ENCODE measurements at regions of chr10 and their contacts with region 1.

Region 1: DNA sequence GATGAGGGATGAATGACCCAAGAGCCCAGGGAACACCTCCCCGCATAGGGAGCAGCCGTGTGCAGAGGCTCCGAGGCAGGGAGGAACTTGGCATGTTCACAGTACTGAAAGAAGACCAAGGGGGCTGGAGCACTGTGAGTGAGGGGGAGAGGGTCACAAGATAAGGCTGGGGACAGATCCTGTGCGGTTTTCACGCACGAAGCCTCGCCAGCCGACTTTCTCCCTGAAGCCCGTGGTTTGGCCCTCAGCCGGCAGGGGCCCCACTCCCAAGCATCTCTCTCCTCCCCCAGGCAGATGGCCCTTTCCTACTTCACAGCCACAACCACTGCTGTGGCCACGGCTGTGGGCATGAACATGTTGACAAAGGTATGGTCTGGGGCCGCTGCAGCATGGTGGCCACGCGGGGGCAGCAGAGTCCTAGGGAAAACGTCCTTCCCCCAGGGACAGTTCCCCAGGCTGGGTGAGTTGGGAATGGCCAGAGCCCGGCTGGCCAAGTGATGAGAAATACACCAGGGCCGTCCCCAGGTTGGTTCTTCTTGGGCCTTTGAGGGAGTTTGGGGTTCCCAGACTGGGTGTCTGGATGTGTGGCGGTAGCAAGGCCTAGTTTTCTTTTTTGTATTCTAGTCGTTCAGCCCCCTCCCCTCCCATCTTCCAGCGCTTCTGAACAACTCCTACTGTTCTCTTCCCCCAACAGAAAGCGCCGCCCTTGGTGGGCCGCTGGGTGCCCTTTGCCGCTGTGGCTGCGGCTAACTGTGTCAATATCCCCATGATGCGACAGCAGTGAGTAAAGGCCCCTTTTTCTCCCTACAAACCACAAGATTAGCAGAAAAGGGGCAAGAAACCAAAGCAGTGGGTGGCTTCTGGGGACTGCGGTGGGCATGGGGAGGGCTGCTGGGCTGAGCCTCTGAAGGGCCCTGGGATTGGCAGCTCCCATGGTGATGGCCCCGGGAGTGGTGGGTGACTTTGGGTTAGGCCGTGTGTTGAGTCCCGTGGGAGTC is 14.4 kb upstream of the WBP1L start:
- DNase-seq: peak; percentile 93 to 98
- ATAC-seq: peak; percentile 94
- H3K4me3 ChIP-seq: no peak overlapping the region
- H3K27ac ChIP-seq: no peak overlapping the region
- H3K4me1 ChIP-seq: no peaks in the 10 kb centered on the region
- H3K27me3 ChIP-seq: no peaks in the 10 kb centered on the region

Region 2: GRCh38 chr10:102904346-102904745 is 175.0 kb after region 1 on chr10:
- intact Hi-C with region 1: loop called (anchors 1 to 2 kb)
- DNase-seq: no peak
- ATAC-seq: no peak
- H3K4me3 ChIP-seq: no peak overlapping the region
- H3K27ac ChIP-seq: no peak overlapping the region
- H3K4me1 ChIP-seq: no peaks in the 10 kb centered on the region
- H3K27me3 ChIP-seq: no peaks in the 10 kb centered on the region

Region 3: GRCh38 chr10:103069453-103070331 is 340.4 kb after region 1 on chr10:
- intact Hi-C with region 1: loop called in 1 of 2 experiments (anchors 5 kb)
- DNase-seq: peak in 1 of 2 donors; percentile 69
- ATAC-seq: peak; percentile 51
- H3K4me3 ChIP-seq: no peak overlapping the region
- H3K27ac ChIP-seq: no peak overlapping the region
- H3K4me1 ChIP-seq: no peaks in the 10 kb centered on the region
- H3K27me3 ChIP-seq: no peaks in the 10 kb centered on the region

Region 4: DNA sequence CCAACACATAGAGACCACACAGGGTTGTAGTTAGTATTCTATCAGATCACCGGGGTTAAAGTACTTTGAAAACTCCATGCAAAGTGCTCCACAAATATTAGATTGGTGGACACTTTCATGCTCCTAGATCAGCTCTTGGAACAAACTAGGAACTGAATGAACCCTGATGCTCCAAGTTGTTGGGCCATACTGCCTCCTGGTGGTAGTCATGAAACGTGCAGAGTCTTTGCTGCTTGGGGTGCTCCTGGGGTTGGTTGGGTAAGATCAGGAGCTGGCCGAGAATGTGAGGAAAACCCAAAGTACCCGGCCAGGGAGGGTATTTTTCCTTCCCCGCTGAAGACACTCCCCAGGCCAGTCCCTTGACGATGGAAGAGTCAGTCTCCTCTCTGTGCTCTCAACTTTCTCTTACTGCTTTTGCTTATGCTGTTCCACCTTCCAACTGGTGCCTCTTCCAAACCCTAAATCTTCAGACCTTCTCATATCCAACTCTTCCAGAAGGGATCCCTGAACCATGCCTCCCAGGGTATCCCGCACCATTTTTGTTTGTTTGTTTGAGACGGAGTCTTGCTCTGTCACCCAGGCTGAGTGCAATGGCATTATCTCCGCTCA is 515.4 kb after region 1 on chr10:
- intact Hi-C with region 1: loop called in 1 of 2 experiments (anchors 10 kb)
- DNase-seq: peak; percentile 77 to 81
- ATAC-seq: peak; percentile 91
- H3K4me3 ChIP-seq: no peak overlapping the region
- H3K27ac ChIP-seq: no peak overlapping the region
- H3K4me1 ChIP-seq: peaks cover 0 to 7% of the 10 kb centered on the region in 2 donors
- H3K27me3 ChIP-seq: no peaks in the 10 kb centered on the region

Measured in aorta (tissue), 5 donors.